ENCODE measurements at regions of chr10 and their contacts with region 1.

Region 1: GRCh38 chr10:102713814-102714620 is at the start of gene ARL3:
- DNase-seq: peak; percentile 96 to 98
- ATAC-seq: peak; percentile 98 to 99 (median 99)
- H3K4me3 ChIP-seq: peak within 1 kb of the TSS; percentile 66 to 99 (median 92)
- H3K27ac ChIP-seq: peak within 1 kb of the TSS; percentile 13 to 89 (median 83)
- H3K4me1 ChIP-seq: peaks cover 11 to 55% (median 33%) of the 10 kb centered on the region in 9 donors
- H3K27me3 ChIP-seq: no peaks in the 10 kb centered on the region
- CTCF ChIP-seq: peak in 7 of 9 donors; percentile 2 to 49 (median 45)
- total RNA-seq, gene ARL3: 10.9 to 17.8 (median 13.6) TPM

Region 2: DNA sequence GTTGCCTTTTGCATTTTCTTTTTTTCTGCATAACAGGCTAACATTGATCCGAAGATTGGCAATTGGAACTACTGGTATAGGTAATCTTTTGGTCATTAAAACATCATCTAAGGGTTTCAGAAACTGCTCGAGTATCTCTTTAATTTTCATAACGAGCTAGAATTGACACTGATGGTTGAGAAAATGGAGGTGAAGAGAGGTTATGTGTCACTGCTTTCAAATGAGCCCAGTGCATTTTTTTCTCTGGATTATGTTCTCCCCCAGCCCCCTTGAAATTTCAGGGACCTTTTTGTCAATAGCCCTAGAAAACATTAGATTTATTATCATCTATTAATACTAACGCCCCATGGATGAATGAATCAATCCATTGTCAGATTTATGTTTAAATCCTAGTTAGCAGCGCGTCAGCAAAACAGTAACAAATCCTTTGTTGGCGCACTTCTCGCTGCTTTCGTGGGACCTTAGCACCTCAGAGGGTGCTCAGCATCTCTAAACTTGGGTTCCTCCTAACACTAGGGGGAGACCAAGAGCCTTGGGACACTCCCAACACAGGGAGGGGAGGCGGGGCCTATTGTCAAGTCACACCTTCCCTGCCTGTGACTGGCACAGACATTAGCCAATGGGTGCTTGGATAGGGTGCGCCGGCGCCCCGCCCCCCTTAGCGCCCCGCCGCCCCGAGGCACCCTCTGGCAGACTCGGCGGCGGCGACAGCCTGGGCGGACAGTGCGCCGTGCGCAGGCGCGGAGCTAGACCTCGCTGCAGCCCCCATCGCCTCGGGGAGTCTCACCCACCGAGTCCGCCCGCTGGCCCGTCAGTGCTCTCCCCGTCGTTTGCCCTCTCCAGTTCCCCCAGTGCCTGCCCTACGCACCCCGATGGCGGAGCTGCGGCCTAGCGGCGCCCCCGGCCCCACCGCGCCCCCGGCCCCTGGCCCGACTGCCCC is 210.5 kb before region 1 on chr10 and contains the start of gene SUFU:
- intact Hi-C with region 1: loop called in 2 of 10 experiments (anchors 10 kb)
- DNase-seq: peak; percentile 96 to 99
- ATAC-seq: peak; percentile 80 to 90 (median 84)
- H3K4me3 ChIP-seq: peak within 1 kb of the TSS; percentile 66 to 99 (median 88)
- H3K27ac ChIP-seq: peak within 1 kb of the TSS in 9 of 10 donors; percentile 79 to 96 (median 94)
- H3K4me1 ChIP-seq: peaks cover 11 to 69% (median 47%) of the 10 kb centered on the region in 9 donors
- H3K27me3 ChIP-seq: no peaks in the 10 kb centered on the region
- CTCF ChIP-seq: peak; percentile 89 to 99 (median 94)
- total RNA-seq, gene SUFU: 5.7 to 10.1 (median 7.5) TPM

Region 3: DNA sequence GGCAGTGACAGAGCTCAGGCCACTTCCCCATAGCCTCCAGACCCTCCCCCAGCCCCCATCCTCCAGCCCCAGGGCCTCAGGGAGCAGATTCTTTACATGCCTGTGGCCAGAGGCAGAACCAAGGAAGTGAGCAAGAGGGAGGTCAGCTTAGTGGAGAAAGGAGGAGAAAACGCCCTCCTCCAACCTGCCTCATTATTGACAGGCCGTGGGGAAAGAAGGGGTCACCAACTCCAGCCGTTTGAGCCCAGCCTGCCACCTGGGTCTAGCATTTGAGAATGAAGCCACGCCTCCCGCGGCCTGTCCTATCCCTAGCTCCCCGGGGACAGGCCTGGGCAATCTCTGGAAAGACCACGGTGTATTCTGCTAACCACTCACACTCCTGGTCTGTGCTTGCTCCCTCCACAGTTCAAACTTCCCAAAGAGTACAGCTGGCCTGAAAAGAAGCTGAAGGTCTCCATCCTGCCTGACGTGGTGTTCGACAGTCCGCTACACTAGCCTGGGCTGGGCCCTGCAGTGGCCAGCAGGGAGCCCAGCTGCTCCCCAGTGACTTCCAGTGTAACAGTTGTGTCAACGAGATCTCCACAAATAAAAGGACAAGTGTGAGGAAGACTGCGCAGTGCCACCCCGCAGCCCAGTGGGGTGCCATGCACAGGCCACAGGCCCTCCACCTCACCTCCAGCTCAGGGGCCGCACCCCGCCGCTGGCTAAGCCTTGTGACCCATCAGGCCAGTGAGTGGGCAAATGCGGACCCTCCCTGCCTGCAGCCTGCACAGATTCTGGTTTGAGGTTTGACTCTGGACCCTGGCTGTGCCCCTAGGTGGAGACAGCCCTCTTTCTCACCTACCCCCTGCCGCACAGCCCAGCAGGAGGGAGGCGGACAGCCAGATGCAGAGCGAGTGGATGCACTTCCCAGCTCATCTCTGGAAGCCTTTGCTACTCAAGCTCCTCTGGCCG is 84.1 kb before region 1 on chr10:
- intact Hi-C with region 1: no loop called
- DNase-seq: no peak
- ATAC-seq: no peak
- H3K4me3 ChIP-seq: no peak overlapping the region
- H3K27ac ChIP-seq: peak overlapping the region in 9 of 10 donors; percentile 80 to 97 (median 90)
- H3K4me1 ChIP-seq: peaks cover 52 to 94% (median 78%) of the 10 kb centered on the region in 9 donors
- H3K27me3 ChIP-seq: no peaks in the 10 kb centered on the region
- CTCF ChIP-seq: no peak

Region 4: GRCh38 chr10:102641880-102642735 is 71.9 kb before region 1 on chr10:
- intact Hi-C with region 1: loop called in 4 of 10 experiments (anchors 2 to 10 kb)
- DNase-seq: peak; percentile 99
- ATAC-seq: peak; percentile 70 to 84 (median 80)
- H3K4me3 ChIP-seq: peak overlapping the region; percentile 69 to 97 (median 90)
- H3K27ac ChIP-seq: peak overlapping the region; percentile 95 to 100 (median 99)
- H3K4me1 ChIP-seq: peaks cover 4 to 23% (median 13%) of the 10 kb centered on the region in 9 donors
- H3K27me3 ChIP-seq: no peaks in the 10 kb centered on the region
- CTCF ChIP-seq: peak in 3 of 9 donors; percentile 6 to 15 (median 10)

Region 5: GRCh38 chr10:102652170-102652916 is 61.7 kb before region 1 on chr10:
- intact Hi-C with region 1: loop called in 5 of 10 experiments (anchors 2 to 10 kb)
- DNase-seq: no peak
- ATAC-seq: no peak
- H3K4me3 ChIP-seq: no peak overlapping the region
- H3K27ac ChIP-seq: peak overlapping the region in 4 of 10 donors; percentile 45 to 100 (median 100)
- H3K4me1 ChIP-seq: peaks cover 49 to 85% (median 76%) of the 10 kb centered on the region in 9 donors
- H3K27me3 ChIP-seq: no peaks in the 10 kb centered on the region
- CTCF ChIP-seq: no peak

Region 6: GRCh38 chr10:102668326-102669107 is 45.5 kb before region 1 on chr10:
- intact Hi-C with region 1: no loop called
- DNase-seq: no peak
- ATAC-seq: peak in 1 of 8 donors; percentile 13
- H3K4me3 ChIP-seq: no peak overlapping the region
- H3K27ac ChIP-seq: peak overlapping the region; percentile 64 to 87 (median 70)
- H3K4me1 ChIP-seq: peaks cover 11 to 48% (median 32%) of the 10 kb centered on the region in 9 donors
- H3K27me3 ChIP-seq: no peaks in the 10 kb centered on the region
- CTCF ChIP-seq: no peak

Region 7: DNA sequence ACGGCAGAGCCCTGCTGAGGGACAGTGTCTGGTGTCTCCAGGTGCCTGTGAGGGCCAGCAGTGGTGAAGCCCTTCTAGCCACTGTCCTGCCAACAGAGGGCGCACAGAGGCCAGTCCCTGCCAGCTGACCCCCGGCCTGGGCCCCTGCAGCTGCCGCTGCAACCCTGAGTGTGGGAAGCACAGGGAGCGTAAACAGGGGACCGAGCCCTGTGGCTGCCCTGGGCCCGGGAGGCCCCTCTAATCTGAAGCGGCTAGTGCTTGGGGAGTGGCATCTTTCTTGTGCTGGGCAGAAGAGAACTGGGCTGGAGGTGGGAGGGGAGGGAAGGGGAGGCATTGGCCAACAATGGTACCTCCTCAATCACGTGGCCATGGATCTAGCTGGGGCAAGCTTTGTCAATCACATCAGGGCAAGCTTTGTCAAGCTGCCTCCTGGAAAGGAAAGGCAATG is 35.2 kb before region 1 on chr10:
- intact Hi-C with region 1: loop called in 4 of 10 experiments (anchors 5 kb)
- DNase-seq: peak; percentile 63 to 70
- ATAC-seq: peak; percentile 33 to 76 (median 70)
- H3K4me3 ChIP-seq: peak overlapping the region in 4 of 10 donors; percentile 3 to 25 (median 6)
- H3K27ac ChIP-seq: peak overlapping the region in 8 of 10 donors; percentile 35 to 93 (median 44)
- H3K4me1 ChIP-seq: peaks cover 8 to 57% (median 55%) of the 10 kb centered on the region in 9 donors
- H3K27me3 ChIP-seq: no peaks in the 10 kb centered on the region
- CTCF ChIP-seq: peak; percentile 42 to 78 (median 73)

Region 8: DNA sequence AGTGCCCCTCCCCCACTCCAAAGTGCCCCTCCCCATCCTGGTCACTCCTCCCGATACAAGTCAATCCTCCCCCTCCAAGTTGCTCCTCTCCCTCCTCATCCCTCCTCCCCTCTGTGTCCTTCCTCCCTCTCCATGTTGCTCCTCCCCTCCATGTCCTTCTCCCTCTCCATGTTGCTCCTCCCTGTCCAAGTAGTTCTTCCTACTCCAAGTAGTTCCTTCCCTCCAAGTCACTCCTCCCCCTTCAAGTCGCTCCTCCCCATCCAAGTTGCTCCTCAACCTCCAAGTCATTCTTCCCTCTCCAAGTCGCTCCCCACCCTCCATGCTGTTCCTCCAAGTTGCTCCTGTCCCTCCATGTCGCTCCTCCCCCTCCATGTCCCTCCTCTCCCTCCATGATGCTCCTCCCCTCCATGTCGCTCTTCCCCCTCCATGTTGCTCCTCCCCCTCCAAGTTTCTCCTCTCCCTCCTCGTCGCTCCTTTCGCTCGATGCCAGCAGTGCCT is 21.1 kb after region 1 on chr10:
- intact Hi-C with region 1: loop called in 1 of 10 experiments (anchors 2 kb)
- DNase-seq: no peak
- ATAC-seq: peak in 7 of 8 donors; percentile 6 to 68 (median 37)
- H3K4me3 ChIP-seq: no peak overlapping the region
- H3K27ac ChIP-seq: no peak overlapping the region
- H3K4me1 ChIP-seq: peaks cover 0 to 19% (median 4%) of the 10 kb centered on the region in 9 donors
- H3K27me3 ChIP-seq: no peaks in the 10 kb centered on the region
- CTCF ChIP-seq: no peak

Measured in heart right ventricle (tissue), 16 donors.